ENCODE measurements at regions of chr14 and their contacts with region 1.

Region 1: GRCh38 chr14:75560962-75561432 is 17.4 kb upstream of the FLVCR2 start:
- H3K4me3 ChIP-seq: no peak overlapping the region
- H3K27ac ChIP-seq: no peak overlapping the region
- H3K4me1 ChIP-seq: no peaks in the 10 kb centered on the region
- CTCF ChIP-seq: peak; percentile 55

Region 2: DNA sequence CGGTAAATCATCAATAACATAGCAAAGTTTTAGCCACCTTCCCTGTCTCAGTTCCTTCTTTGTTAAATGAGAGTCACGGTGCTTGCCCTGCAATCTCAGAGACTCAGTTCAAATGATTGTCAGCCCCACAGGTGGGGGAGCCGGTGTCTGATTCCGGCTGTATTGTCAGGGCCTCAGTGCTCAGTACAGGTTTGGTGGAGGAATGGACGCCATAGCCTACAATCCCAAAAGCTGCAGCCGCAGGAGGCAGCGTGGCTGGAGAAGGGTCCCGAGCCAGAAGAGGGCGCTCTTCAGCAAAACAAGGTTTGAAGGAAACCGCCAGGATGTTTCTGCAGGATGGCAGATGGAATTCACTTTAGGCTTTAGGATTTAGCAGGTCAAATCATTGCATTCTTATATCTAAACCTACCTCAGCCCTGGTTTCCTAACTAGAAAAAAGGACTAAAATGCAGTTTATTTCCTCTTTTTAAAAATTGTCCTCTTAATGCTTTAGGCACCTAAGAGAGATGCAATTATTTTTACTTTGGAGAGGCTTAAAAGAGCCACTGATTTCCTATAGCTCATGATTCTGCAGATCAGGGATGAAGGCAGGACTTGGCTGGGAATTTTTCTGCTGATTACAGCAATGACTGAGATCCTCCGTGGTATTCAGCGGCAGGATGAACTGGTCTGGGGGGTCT is 253.2 kb before region 1 on chr14:
- CTCF ChIA-PET with region 1: interaction called, 22 read pairs
- POLR2A ChIA-PET with region 1: no interaction called
- H3K4me3 ChIP-seq: no peak overlapping the region
- H3K27ac ChIP-seq: no peak overlapping the region
- H3K4me1 ChIP-seq: 0 out of 2 replicates have a peak, but pooled peaks cover 2% of the 10 kb centered on the region
- CTCF ChIP-seq: peak; percentile 67

Region 3: DNA sequence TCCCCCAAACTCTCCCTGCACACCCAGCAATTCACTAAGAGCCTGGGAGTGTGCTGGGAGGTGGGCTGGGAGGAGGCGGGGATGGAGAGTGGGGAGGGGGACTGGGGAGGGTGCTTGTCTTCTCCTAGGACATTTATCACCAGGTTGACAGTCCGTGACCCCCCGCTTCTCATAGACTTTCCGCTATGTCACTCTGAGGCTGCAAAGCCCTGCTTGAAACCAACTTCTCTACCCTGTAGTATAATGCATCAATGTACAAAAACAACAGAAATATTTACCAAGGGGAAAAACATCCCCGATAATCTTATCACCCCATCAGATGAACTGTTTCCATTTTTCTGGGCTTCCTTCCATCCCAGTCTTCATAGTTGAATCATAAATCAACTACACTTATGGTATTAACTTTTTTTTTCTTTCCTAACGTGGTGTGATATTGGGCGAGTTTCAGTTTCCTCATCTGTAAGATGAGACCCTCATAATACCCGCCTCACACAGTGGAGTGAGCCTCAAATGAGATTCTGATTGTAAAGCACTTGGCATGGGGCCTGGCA is 67.3 kb before region 1 on chr14:
- CTCF ChIA-PET with region 1: interaction called, 18 read pairs
- POLR2A ChIA-PET with region 1: no interaction called
- H3K4me3 ChIP-seq: no peak overlapping the region
- H3K27ac ChIP-seq: no peak overlapping the region
- H3K4me1 ChIP-seq: peaks cover 11% of the 10 kb centered on the region
- CTCF ChIP-seq: no peak

Region 4: DNA sequence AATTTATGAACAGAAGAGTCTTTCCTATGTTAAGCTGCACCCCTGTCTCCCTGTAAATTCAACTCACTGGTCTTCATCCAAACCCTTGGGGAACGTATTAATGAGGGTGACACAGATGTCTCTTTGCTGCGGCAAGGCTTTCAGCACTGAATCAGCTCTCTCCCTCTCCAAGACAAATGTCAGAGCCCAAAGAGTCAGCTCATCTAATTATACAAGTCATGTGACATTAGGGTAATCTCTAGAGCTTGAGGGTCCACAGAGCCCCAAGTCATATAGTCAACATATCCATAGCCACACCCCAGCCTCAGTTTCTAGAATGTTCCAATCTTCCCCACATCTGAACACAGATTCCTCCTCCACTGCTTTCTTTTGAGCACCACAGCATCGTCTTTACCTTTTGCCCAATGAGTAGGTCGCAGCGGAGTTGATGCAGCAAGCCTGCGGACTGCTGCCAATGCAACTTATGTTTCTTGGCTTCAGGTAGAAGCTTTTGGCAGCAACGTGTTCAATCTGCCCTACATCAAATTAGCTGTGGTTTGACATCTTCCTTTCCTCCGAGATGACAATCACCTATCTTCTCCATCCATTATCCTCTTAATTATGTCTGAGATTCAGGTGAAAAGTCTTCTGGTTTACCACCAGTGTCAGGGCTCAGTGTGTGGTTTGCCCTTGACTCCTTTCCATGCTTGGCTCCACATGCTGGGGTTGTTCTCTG is 33.4 kb before region 1 on chr14:
- CTCF ChIA-PET with region 1: interaction called, 14 read pairs
- POLR2A ChIA-PET with region 1: no interaction called
- H3K4me3 ChIP-seq: no peak overlapping the region
- H3K27ac ChIP-seq: no peak overlapping the region
- H3K4me1 ChIP-seq: no peaks in the 10 kb centered on the region
- CTCF ChIP-seq: no peak

Region 5: GRCh38 chr14:75577729-75578101 is 16.7 kb after region 1 on chr14:
- CTCF ChIA-PET with region 1: interaction called, 51 read pairs
- POLR2A ChIA-PET with region 1: no interaction called
- H3K4me3 ChIP-seq: peak overlapping the region; percentile 49
- H3K27ac ChIP-seq: no peak overlapping the region; the same call in 1 of the 2 replicates
- H3K4me1 ChIP-seq: peaks cover 4% of the 10 kb centered on the region; the same call in 1 of the 2 replicates
- CTCF ChIP-seq: peak; percentile 52